Activated CD8-positive, alpha-beta T cell treated with anti-CD3 and anti-CD28 coated beads for 36 hours (primary cell): ENCODE measurements at regions of chr2 and their contacts with region 1.

Region 1: DNA sequence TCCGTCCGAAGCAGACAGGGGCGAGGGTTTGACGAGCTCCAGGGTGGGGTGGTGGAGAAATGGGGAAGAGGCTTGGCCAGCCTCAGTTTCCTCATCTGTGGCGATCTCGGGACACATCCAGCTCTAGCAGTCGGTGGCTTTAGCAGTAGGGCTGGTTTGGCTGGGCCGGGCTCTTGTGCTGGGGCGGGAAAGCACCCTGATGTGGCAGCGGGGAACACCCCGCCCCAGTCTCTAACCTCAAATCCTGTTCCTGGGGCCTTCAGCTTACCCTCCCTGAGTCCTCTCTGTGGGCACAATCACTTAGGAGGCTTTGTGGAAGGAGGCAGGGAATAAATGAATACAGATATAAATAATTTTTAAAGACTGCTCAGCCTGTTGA is 26.5 kb upstream of the MCFD2 start:
- DNase-seq: peak; percentile 84
- ATAC-seq: peak; percentile 41
- H3K4me3 Mint-ChIP-seq: peak overlapping the region; percentile 90
- H3K27ac Mint-ChIP-seq: peak overlapping the region; percentile 99
- H3K4me1 Mint-ChIP-seq: peaks cover 53% of the 10 kb centered on the region
- H3K27me3 Mint-ChIP-seq: no peaks in the 10 kb centered on the region
- CTCF ChIP-seq: no peak

Region 2: DNA sequence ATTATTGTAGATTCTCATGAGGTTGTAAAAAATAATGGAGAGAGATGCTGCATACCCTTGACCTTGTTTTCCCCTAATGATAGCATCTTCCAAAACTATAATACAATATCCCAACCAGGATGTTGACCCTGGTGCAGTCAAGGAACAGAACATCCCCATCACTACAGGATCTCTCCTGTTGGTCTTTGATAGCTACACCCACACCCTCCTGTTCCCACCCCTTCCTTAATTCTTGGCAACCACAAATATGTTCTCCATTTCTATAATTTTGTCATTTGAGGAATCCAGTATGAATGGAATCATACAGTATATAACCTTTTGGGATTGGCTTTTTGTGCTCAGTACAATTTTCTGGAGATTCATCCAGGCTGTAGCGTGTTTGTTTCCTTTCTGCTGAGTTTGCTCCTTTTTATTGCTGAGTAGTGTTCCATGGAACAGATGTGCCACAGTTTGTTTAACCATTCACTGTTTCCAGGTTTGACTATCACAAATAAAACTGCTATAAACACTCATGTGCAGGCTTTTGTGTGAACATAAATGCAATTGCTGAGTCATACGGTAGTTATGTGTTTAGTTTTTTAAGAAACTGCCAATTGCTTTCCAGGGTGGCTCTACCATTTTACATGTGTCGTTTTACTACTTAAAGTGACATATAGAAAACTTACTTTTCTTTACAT is 48.7 kb before region 1 on chr2:
- CTCF ChIA-PET with region 1: no interaction called
- POLR2A ChIA-PET with region 1: no interaction called
- intact Hi-C with region 1: no loop called
- DNase-seq: no peak
- ATAC-seq: peak; percentile 34
- H3K4me3 Mint-ChIP-seq: no peak overlapping the region
- H3K27ac Mint-ChIP-seq: no peak overlapping the region
- H3K4me1 Mint-ChIP-seq: no peaks in the 10 kb centered on the region
- H3K27me3 Mint-ChIP-seq: peaks cover 3% of the 10 kb centered on the region
- CTCF ChIP-seq: no peak

Region 3: DNA sequence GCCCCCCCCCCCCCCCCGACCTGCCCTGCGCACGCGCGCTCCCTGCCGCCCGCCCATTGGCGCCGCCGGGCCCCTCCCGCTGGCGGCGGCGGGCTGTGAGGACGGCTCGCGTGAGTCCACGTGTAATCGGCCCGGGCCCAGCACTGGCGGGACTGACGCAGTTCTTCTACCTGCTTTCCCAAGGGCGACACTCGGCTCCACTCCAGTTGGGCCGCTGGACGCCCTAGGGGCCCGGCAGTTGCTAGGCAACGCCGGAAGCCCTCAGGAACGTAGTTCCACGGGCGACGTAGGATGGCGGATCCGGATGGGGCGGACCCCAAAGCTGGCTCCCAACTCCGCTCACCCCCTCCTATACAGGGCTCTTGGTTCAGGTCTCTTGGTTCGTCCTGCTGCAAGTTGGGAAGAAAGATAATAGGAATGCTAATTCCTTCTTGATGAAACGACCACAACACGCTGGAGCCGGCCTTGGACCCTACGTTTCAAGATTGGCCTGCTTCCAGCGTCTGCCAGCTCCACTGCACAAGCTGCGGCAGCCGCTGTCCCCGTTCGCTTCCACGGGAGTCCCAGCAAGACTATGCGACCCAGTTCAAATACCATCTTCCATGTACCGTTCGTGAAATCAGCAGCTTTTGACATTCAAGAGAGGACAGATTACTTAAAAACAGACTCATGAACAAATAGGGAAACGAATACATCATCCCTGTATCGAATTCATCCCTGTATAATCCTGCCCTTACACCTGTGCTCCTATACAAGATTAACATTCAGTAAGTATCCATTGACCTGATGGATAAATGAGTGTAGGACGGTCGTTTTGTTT is 26.1 kb before region 1 on chr2:
- CTCF ChIA-PET with region 1: interaction called, 21 read pairs
- POLR2A ChIA-PET with region 1: interaction called, 3 read pairs
- intact Hi-C with region 1: loop called (anchors 2 kb)
- DNase-seq: peak; percentile 84
- ATAC-seq: peak; percentile 89
- H3K4me3 Mint-ChIP-seq: peak overlapping the region; percentile 95
- H3K27ac Mint-ChIP-seq: peak overlapping the region; percentile 83
- H3K4me1 Mint-ChIP-seq: peaks cover 49% of the 10 kb centered on the region
- H3K27me3 Mint-ChIP-seq: no peaks in the 10 kb centered on the region
- CTCF ChIP-seq: no peak

Region 4: GRCh38 chr2:46923041-46923528 is 19.0 kb before region 1 on chr2:
- CTCF ChIA-PET with region 1: interaction called, 21 read pairs
- POLR2A ChIA-PET with region 1: interaction called, 4 read pairs
- intact Hi-C with region 1: no loop called
- DNase-seq: no peak
- ATAC-seq: peak; percentile 34
- H3K4me3 Mint-ChIP-seq: no peak overlapping the region
- H3K27ac Mint-ChIP-seq: no peak overlapping the region
- H3K4me1 Mint-ChIP-seq: peaks cover 31% of the 10 kb centered on the region
- H3K27me3 Mint-ChIP-seq: no peaks in the 10 kb centered on the region
- CTCF ChIP-seq: no peak

Region 5: DNA sequence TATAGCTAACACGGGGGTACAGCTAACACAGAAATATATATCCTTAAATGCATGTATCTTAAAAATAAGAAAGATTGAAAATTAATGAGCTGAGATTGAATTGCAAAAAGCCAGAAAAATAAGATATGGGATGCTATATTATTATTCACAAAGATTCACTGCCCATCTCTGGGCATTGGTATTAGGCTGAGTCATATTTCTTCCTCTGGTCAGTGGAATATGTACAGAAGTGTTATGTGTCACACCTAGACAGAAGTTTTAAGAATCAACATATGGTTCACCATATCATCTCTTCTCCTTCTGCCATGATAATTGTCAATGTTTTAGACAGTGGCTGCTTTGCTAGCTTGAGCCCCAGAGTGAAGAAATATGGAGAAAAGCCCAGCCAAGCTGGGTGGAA is 12.5 kb before region 1 on chr2:
- CTCF ChIA-PET with region 1: interaction called, 16 read pairs
- POLR2A ChIA-PET with region 1: interaction called, 4 read pairs
- intact Hi-C with region 1: no loop called
- DNase-seq: no peak
- ATAC-seq: no peak
- H3K4me3 Mint-ChIP-seq: no peak overlapping the region
- H3K27ac Mint-ChIP-seq: no peak overlapping the region
- H3K4me1 Mint-ChIP-seq: peaks cover 3% of the 10 kb centered on the region
- H3K27me3 Mint-ChIP-seq: no peaks in the 10 kb centered on the region
- CTCF ChIP-seq: no peak

Region 6: GRCh38 chr2:46979571-46979979 is 37.4 kb after region 1 on chr2:
- CTCF ChIA-PET with region 1: interaction called, 3 read pairs
- POLR2A ChIA-PET with region 1: interaction called, 3 read pairs
- intact Hi-C with region 1: loop called (anchors 2 kb)
- DNase-seq: peak; percentile 82
- ATAC-seq: peak; percentile 75
- H3K4me3 Mint-ChIP-seq: peak overlapping the region; percentile 65
- H3K27ac Mint-ChIP-seq: peak overlapping the region; percentile 92
- H3K4me1 Mint-ChIP-seq: peaks cover 66% of the 10 kb centered on the region
- H3K27me3 Mint-ChIP-seq: no peaks in the 10 kb centered on the region
- CTCF ChIP-seq: no peak